Activated CD4-positive, alpha-beta T cell treated with anti-CD3 and anti-CD28 coated beads for 36 hours (primary cell): ENCODE measurements at regions of chr11 and their contacts with region 1.

Region 1: GRCh38 chr11:67507864-67508485 is at the start of gene CDK2AP2:
- DNase-seq: peak; percentile 99
- ATAC-seq: peak; percentile 78
- H3K4me3 Mint-ChIP-seq: peak within 1 kb of the TSS; percentile 89
- H3K27ac Mint-ChIP-seq: peak within 1 kb of the TSS; percentile 88
- H3K4me1 Mint-ChIP-seq: peaks cover 31% of the 10 kb centered on the region
- H3K27me3 Mint-ChIP-seq: no peaks in the 10 kb centered on the region
- total RNA-seq, gene CDK2AP2: 64.1 to 68.7 TPM

Region 2: DNA sequence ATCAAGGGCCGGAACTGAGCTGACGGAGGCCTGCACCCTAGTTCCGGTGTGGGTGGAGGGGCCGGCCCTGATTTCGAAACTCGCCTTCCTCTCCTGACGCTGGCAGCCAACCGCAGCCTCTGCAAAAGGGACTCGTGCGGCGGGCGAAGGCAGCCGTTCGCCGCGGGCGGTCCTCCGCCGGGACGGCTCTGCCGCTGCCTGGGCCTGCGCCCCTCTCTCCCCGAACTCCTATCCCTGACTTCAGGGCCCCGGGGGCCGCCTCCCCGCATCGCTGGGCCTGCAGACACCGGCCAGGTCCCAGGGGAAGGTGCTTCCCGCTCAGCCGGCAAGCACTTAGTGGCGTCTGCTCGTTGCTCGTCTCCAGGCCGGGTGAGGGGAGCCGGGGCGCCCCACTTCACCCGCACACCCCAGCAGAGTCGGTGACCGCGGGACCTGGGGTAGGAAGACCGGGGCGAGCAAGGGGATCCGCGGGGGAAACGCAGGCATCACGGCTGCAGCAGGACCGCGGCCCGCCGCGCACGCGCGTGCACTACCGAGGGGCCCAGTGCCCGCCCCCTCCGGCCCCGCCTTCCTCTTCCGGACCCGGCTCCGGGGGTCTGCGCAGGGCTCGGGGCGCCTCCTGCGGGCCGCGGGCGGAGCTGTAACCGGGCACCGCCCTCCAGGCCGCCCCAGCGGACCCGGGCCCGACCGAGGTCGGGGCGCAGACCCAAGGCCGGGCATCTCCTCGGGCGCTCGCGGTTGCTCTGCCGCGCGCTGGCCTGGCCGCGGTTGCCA is 219.3 kb before region 1 on chr11:
- CTCF ChIA-PET with region 1: no interaction called
- POLR2A ChIA-PET with region 1: no interaction called
- intact Hi-C with region 1: loop called in 1 of 2 experiments (anchors 2 kb)
- DNase-seq: peak; percentile 95
- ATAC-seq: peak; percentile 62
- H3K4me3 Mint-ChIP-seq: peak overlapping the region; percentile 64
- H3K27ac Mint-ChIP-seq: peak overlapping the region; percentile 97
- H3K4me1 Mint-ChIP-seq: peaks cover 56% of the 10 kb centered on the region
- H3K27me3 Mint-ChIP-seq: no peaks in the 10 kb centered on the region

Region 3: GRCh38 chr11:67420646-67421420 is 87.1 kb before region 1 on chr11:
- CTCF ChIA-PET with region 1: no interaction called
- POLR2A ChIA-PET with region 1: no interaction called
- intact Hi-C with region 1: loop called in 1 of 2 experiments (anchors 1 kb)
- DNase-seq: peak; percentile 99
- ATAC-seq: peak; percentile 92
- H3K4me3 Mint-ChIP-seq: peak overlapping the region; percentile 76
- H3K27ac Mint-ChIP-seq: peak overlapping the region; percentile 84
- H3K4me1 Mint-ChIP-seq: peaks cover 49% of the 10 kb centered on the region
- H3K27me3 Mint-ChIP-seq: no peaks in the 10 kb centered on the region

Region 4: DNA sequence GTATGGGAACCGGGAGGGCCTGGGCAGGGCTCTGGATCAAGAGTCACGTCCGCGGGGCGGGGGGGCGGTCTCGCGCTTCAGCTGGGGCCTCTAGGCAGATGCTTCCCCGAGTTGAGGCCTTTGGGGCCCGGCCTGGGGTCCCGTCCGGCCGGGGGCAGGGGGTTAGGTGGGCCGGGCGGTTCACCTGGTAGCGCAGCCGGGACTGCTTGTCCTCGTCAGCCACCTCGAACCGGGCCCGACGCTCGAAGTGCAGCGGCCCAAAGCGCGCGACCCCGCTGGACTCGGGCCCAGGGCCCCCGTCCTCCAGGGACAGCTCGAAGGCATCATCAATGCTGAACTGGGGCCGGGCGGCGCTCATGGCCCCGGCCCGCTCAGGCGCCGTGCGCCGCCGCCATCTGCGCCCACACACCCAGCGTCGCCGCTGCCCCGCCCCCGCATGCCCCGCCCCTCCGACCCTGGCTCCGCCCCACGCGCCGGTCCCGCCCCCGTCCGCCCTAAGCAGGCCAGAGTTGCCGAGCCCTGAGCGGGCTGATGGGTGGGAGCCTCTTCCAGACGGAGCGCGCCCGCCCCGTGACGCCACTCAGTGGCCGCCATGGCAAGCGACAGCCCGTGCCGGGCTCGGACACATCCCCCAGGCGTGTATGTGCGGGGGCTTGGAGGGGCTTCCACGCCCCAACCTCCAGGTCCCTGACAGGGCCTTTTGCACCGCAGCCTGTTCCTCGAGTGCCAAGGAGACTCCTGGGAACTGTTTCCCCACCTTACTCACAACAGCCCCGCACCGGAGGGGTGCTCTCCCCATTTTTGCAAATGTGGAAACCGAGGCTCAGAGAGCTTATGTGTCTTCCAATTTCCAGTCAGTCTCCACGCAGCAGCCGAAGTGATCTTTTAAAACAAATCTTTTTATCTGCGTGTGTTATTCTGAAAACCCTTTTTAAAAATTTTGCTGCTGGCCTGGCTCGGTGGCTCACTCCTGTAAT is 38.9 kb before region 1 on chr11 and contains the start of gene TMEM134:
- CTCF ChIA-PET with region 1: interaction called, 5 read pairs
- POLR2A ChIA-PET with region 1: no interaction called
- intact Hi-C with region 1: loop called (anchors 1 kb)
- DNase-seq: peak; percentile 97
- ATAC-seq: peak; percentile 78
- H3K4me3 Mint-ChIP-seq: peak within 1 kb of the TSS; percentile 82
- H3K27ac Mint-ChIP-seq: peak within 1 kb of the TSS; percentile 86
- H3K4me1 Mint-ChIP-seq: peaks cover 23% of the 10 kb centered on the region
- H3K27me3 Mint-ChIP-seq: no peaks in the 10 kb centered on the region
- total RNA-seq, gene TMEM134: 69.9 to 74.7 TPM

Region 5: GRCh38 chr11:67606492-67607201 is 98.7 kb after region 1 on chr11 and contains the start of gene NDUFV1:
- CTCF ChIA-PET with region 1: interaction called, 3 read pairs
- POLR2A ChIA-PET with region 1: no interaction called
- intact Hi-C with region 1: loop called (anchors 1 to 5 kb)
- DNase-seq: peak; percentile 98
- ATAC-seq: peak; percentile 100
- H3K4me3 Mint-ChIP-seq: peak within 1 kb of the TSS; percentile 92
- H3K27ac Mint-ChIP-seq: peak within 1 kb of the TSS; percentile 90
- H3K4me1 Mint-ChIP-seq: peaks cover 16% of the 10 kb centered on the region
- H3K27me3 Mint-ChIP-seq: peaks cover 9% of the 10 kb centered on the region
- total RNA-seq, gene NDUFV1: 253 to 287 TPM

Region 6: DNA sequence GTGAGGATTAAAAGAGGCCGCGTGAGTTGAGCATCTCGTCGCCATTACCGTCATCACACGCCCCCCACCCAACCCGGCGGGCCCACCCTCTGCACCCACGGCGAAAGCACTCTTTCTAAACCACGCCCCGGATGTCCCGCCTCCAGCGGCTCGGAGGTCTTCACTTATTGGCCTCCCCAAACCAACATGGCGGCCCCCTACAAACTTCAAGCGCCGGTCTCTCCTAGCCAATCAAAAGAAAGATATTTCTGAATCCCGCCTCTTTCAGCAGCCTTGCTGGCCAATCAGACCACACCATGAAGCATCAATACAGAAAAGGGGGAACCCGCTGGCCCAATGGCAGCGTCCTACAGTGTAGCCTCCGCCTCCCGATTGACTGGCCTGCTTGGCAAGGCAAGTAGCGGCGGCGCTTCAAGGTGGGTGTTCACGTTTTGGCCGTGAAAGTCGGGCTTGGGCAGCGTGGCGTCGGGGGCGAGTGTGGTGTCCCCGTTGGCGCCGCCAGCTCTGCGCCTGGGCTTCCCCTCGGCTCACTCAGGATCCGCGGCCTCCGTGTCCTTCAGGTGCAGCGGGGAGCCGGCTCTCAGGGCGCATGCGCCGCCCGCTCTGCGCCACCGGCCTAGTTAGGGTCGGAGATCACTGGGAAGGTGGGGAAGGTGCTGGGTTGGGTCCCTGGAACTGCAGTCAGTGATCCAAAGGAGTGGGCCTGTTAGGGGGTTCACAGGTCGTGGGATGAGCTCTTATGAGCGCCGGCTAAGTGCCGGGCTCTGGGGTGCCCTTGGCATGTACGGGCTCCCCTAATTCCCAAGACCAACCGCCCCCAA is 522.6 kb after region 1 on chr11 and contains the start of gene NDUFS8:
- CTCF ChIA-PET with region 1: no interaction called
- POLR2A ChIA-PET with region 1: no interaction called
- intact Hi-C with region 1: loop called in 1 of 2 experiments (anchors 1 kb)
- DNase-seq: peak; percentile 97
- ATAC-seq: peak; percentile 99
- H3K4me3 Mint-ChIP-seq: peak within 1 kb of the TSS; percentile 96
- H3K27ac Mint-ChIP-seq: peak within 1 kb of the TSS; percentile 95
- H3K4me1 Mint-ChIP-seq: peaks cover 26% of the 10 kb centered on the region
- H3K27me3 Mint-ChIP-seq: no peaks in the 10 kb centered on the region
- total RNA-seq, gene NDUFS8: 108 to 113 TPM

Region 7: DNA sequence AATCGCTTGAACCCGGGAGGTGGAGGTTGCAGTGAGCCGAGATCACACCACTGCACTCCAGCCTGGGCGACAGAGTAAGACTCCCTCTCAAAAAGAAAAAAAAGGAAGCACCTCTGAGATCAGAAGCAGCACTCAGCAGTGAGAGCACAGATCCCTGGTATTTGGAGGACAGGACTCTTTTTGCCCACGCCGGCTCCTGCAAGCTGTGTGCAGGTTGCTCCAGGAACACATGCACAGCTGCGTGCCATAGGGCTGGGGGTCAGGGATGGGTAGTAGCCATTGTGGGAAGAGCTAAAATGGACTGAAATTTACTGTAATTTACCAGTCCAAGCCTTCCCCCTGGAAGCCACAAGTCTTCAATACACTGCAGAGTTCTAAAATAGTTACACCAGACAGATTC is 727.7 kb after region 1 on chr11:
- CTCF ChIA-PET with region 1: no interaction called
- POLR2A ChIA-PET with region 1: no interaction called
- intact Hi-C with region 1: no loop called
- DNase-seq: no peak
- ATAC-seq: no peak
- H3K4me3 Mint-ChIP-seq: no peak overlapping the region
- H3K27ac Mint-ChIP-seq: no peak overlapping the region
- H3K4me1 Mint-ChIP-seq: no peaks in the 10 kb centered on the region
- H3K27me3 Mint-ChIP-seq: peaks cover 12% of the 10 kb centered on the region